Activated CD4-positive, alpha-beta memory T cell treated with anti-CD3 and anti-CD28 coated beads for 36 hours (primary cell): ENCODE measurements at regions of chr4 and their contacts with region 1.

Region 1: GRCh38 chr4:26319467-26319948 is 1.3 kb upstream of the RBPJ start:
- DNase-seq: peak; percentile 99
- H3K4me3 Mint-ChIP-seq: peak overlapping the region; percentile 100
- H3K27ac Mint-ChIP-seq: peak overlapping the region; percentile 100
- H3K4me1 Mint-ChIP-seq: peaks cover 35% of the 10 kb centered on the region
- H3K27me3 Mint-ChIP-seq: no peaks in the 10 kb centered on the region

Region 2: DNA sequence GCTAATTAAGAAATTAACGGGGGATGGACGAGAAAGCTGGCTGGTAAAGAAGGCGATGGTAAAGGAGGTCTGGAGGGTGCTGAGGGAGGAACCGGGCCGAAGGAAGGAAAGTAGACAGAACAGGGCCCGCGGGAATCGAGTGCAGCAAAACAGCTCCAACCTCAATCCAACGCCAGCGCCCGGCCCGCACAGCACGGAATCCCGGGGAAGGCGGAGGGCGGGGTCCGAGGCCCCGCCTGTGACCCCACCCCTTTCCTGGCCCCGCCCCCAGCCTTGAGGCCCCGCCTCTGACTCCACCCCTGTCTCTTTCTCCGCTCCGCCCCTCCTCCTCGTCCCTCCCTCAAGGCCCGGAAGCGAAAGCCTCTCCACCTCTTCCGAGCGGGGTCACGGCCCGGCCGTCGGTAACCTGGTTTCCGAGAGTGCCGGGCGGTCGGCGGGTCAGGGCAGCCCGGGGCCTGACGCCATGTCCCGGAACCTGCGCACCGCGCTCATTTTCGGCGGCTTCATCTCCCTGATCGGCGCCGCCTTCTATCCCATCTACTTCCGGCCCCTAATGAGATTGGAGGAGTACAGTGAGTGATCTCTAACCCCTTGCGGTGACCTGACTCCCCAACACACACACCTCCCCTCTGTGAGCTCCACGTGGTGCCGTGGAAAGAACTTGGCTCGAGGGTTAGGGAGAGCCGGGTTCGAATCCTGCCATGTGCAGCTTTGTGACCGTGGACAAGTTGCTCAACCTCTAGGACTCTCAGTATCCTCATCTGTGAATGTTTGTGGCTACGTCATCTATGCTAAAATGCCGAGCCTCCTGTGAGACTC is 405.4 kb before region 1 on chr4 and contains the start of gene SMIM20:
- CTCF ChIA-PET with region 1: no interaction called
- POLR2A ChIA-PET with region 1: no interaction called
- intact Hi-C with region 1: loop called (anchors 5 kb)
- DNase-seq: peak; percentile 93
- H3K4me3 Mint-ChIP-seq: peak within 1 kb of the TSS; percentile 87
- H3K27ac Mint-ChIP-seq: peak within 1 kb of the TSS; percentile 94
- H3K4me1 Mint-ChIP-seq: peaks cover 17% of the 10 kb centered on the region
- H3K27me3 Mint-ChIP-seq: no peaks in the 10 kb centered on the region
- total RNA-seq, gene SMIM20: 26.0 to 28.0 TPM

Region 3: GRCh38 chr4:26081795-26082498 is 237.6 kb before region 1 on chr4:
- CTCF ChIA-PET with region 1: interaction called, 24 read pairs
- POLR2A ChIA-PET with region 1: interaction called, 89 read pairs
- intact Hi-C with region 1: loop called (anchors 1 kb)
- DNase-seq: no peak
- H3K4me3 Mint-ChIP-seq: peak overlapping the region; percentile 1
- H3K27ac Mint-ChIP-seq: peak overlapping the region; percentile 90
- H3K4me1 Mint-ChIP-seq: peaks cover 88% of the 10 kb centered on the region
- H3K27me3 Mint-ChIP-seq: no peaks in the 10 kb centered on the region

Region 4: GRCh38 chr4:26150948-26151347 is 168.6 kb before region 1 on chr4:
- CTCF ChIA-PET with region 1: no interaction called
- POLR2A ChIA-PET with region 1: no interaction called
- intact Hi-C with region 1: loop called (anchors 2 kb)
- DNase-seq: peak; percentile 79
- H3K4me3 Mint-ChIP-seq: no peak overlapping the region
- H3K27ac Mint-ChIP-seq: peak overlapping the region; percentile 87
- H3K4me1 Mint-ChIP-seq: peaks cover 47% of the 10 kb centered on the region
- H3K27me3 Mint-ChIP-seq: no peaks in the 10 kb centered on the region

Region 5: DNA sequence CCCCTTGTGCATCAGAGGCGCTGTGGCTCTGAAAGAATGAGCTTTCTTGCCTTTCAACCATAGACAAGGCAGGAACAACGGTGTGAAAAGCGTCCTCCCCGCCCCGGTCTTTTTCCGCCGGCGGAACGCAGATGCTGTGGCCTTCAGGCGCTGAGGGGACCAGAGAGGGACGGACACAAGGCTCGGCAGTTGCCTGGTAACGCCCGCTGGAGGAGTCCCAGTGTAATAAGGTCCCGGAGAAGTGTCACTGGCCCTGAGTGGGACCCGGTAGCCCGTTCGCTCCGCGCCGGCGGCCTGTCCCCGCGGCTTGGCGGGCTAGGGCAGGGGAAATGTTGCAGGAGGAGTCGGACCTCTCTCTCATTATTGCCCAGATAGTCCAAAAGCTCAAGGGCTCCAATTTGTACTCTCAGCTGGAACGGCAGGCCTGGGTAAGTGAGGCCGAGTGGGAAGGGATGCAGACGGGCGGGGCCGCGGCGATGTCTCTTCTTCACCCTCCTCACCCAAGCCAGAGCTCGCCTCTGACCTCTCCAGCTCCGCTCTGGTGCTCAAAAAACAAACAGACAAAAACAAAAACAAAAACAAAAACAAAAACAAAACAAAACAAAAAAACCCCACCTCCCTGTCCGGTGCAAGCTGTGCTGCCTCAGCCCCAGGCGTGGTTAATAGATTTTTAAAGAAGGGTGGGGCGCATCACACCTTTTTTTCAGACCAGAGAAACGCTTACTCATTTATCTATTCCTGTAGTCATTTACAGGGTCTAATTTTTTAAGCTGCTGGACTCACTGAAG is 264.6 kb after region 1 on chr4 and contains the start of gene TBC1D19:
- CTCF ChIA-PET with region 1: no interaction called
- POLR2A ChIA-PET with region 1: interaction called, 6 read pairs
- intact Hi-C with region 1: loop called (anchors 5 kb)
- DNase-seq: peak; percentile 94
- H3K4me3 Mint-ChIP-seq: peak within 1 kb of the TSS; percentile 97
- H3K27ac Mint-ChIP-seq: peak within 1 kb of the TSS; percentile 93
- H3K4me1 Mint-ChIP-seq: peaks cover 20% of the 10 kb centered on the region
- H3K27me3 Mint-ChIP-seq: no peaks in the 10 kb centered on the region
- total RNA-seq, gene TBC1D19: 4.3 to 5.0 TPM